Posterior vena cava (tissue), 2 donors: ENCODE measurements at regions of chr2 and their contacts with region 1.

Region 1: DNA sequence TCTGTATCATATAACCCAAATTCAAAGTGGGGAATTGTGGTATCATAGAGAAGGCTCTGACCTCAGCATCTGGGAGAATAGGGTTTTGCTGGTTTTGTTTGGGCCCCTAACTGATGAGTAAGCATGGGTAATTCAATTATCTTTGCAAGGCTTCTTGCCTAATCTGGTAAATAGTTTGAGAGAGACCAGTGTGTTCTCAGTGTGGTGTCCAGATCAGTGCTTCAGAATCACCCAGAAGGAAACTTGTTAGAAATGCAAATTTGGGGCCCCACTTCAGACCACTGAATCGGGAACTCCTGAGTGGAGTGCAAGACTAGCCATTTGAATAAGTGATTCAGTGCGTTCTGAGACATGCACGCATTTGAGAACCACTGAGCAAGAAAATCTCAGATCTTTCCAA is 282.7 kb downstream of the EPHA4 start:
- DNase-seq: no peak

Region 2: GRCh38 chr2:220533485-220533884 is 755.9 kb before region 1 on chr2:
- intact Hi-C with region 1: loop called in 1 of 2 experiments (anchors 5 kb)
- DNase-seq: no peak

Region 3: GRCh38 chr2:221225752-221226151 is 63.6 kb before region 1 on chr2:
- intact Hi-C with region 1: loop called in 1 of 2 experiments (anchors 2 kb)
- DNase-seq: no peak

Region 4: GRCh38 chr2:221309892-221310583 is 20.6 kb after region 1 on chr2:
- intact Hi-C with region 1: no loop called
- DNase-seq: no peak

Region 5: GRCh38 chr2:221514307-221515040 is 225.1 kb after region 1 on chr2:
- intact Hi-C with region 1: no loop called
- DNase-seq: no peak